Colonic mucosa (tissue), 4 donors: ENCODE measurements at regions of chr5 and their contacts with region 1.

Region 1: GRCh38 chr5:141618804-141619554 is at the start of gene DIAPH1:
- DNase-seq: peak; percentile 98
- H3K4me3 ChIP-seq: peak within 1 kb of the TSS; percentile 94
- H3K27ac ChIP-seq: peak within 1 kb of the TSS; percentile 96
- H3K4me1 ChIP-seq: no peaks in the 10 kb centered on the region
- H3K27me3 ChIP-seq: no peaks in the 10 kb centered on the region
- CTCF ChIP-seq: peak; percentile 95
- total RNA-seq, gene DIAPH1: 113 to 143 TPM

Region 2: DNA sequence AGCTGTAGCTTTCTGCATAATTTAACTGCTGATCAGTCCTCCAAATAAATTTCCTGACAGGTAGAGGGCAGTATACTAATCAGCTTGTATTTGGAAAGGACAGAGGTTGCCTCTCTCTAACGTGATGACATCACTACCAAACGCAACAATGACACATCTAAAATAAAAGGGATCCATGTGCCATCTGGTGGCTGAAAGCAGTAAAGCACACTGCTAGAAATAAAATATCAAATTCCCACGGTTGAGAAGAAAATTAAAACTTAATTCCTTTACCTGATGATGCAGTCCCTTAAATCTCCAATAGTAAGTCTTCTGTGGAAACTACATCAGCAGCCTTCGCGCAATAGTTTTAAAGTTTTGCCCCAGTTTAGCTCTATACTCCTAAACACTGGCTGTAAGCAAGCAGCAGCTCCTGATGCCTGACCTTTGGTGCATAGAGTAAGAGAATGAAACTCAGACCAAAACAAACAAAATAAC is 54.7 kb before region 1 on chr5:
- intact Hi-C with region 1: no loop called
- DNase-seq: peak; percentile 82
- H3K4me3 ChIP-seq: no peak overlapping the region
- H3K27ac ChIP-seq: no peak overlapping the region
- H3K4me1 ChIP-seq: no peaks in the 10 kb centered on the region
- H3K27me3 ChIP-seq: no peaks in the 10 kb centered on the region
- CTCF ChIP-seq: peak; percentile 94

Region 3: DNA sequence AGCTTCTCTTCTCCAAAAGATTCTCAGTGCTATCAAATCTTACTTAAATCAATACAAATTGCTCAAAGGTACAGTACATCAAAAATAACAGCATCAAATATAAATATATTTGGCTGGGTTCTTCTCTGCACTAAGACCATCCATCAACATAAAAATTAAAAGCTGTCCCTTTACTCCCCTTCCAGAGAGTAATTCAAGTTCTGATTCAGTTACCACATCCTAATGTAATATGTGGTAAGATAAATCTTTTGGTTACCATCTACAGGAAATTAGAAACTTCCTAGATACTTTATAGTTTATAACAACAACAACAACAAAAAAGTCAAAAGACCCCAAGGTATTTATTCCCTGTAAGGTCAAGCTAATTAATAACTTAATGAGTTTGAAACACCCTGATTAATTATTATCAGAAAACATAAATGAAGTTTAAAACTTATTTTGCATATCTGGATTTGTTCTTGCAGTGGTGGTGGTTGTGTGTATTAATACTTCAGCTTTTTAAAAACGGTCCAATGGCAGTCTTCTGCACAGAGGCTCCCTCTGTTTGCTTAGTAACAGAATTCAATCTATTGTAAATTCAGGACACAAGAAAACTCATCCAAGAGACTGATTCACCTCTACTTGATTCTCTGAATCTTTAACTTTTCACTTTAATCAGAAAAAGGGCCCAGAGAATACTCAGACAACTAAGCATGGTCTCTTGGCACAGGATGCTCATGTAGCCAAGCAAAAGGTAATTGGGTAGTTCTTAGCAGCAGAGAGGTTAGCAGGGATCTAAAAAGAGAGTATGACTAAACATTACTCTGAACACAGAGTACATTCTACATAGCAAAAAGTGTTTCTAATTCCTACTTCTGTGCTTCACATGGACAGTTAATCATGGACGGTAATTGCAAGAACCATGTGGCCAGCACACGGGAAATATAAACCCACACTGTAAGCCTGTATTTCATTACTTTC is 20.3 kb before region 1 on chr5:
- intact Hi-C with region 1: loop called (anchors 1 kb)
- DNase-seq: no peak
- H3K4me3 ChIP-seq: no peak overlapping the region
- H3K27ac ChIP-seq: no peak overlapping the region
- H3K4me1 ChIP-seq: no peaks in the 10 kb centered on the region
- H3K27me3 ChIP-seq: no peaks in the 10 kb centered on the region
- CTCF ChIP-seq: no peak